ENCODE measurements at regions of chr4 and their contacts with region 1.

Region 1: DNA sequence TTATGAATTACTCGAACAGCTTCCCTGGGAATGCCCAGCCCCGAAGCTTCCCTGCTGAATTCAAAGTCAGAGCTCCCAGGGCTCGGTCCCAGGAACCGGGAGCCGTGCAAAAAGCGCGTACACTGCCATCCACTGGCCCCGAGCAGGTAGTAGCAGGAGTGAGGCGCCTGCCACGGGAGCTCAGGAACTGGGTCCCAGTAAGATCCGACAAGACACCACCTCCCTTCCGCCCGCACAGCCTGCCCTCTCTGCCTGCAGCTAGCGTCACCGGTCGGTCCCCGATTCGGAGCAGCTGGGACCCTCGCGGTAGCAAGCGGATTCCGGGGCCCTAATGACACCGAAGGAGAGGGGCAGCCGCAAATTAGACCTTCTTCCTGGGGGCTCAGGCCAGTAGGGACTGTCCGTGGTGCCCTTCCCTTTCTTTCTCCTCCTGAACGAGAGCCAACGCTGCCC is 1.2 kb downstream of the CORIN start:
- DNase-seq: peak; percentile 74
- H3K4me3 Mint-ChIP-seq: peak overlapping the region; percentile 78
- H3K27ac Mint-ChIP-seq: no peak overlapping the region
- H3K4me1 Mint-ChIP-seq: peaks cover 25% of the 10 kb centered on the region
- H3K27me3 Mint-ChIP-seq: peaks cover 5% of the 10 kb centered on the region

Region 2: DNA sequence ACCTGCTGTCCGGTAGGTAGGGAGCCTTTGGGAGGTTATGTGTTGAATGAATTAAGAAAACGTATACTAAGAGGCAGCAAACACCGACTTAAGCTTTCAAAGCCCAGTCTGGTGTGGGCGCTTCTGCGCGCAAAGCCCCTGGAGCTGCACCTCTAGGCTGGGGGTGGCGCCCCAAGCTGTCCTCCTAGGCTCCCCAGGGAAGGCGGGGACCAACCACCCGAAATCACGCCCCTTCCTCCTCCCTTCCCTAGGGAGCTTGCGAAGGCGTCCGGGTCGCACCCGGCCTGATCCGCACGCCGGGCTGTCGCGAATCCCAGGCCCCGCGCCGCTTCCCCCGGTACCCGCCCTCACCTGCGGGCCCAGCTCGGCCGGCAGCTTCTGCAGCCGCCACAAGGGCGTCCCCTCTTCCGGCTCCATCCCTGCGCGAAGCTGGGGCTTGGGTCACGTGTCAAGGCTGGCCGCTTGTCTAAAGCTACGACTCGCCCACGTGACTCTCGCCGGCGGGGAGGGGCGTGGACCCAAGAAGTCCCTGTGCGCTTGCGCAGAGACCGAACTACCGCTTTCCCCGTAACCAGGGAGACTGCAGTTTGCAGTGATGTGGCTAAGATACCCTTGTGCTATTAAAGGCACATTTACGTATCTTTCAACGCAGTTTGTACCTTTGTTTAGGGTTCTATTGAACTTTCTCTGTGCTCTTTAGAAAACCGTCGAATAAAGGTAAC is 373.3 kb before region 1 on chr4 and contains the start of gene COMMD8:
- CTCF ChIA-PET with region 1: no interaction called
- intact Hi-C with region 1: loop called (anchors 2 kb)
- DNase-seq: peak; percentile 98
- H3K4me3 Mint-ChIP-seq: peak within 1 kb of the TSS; percentile 81
- H3K27ac Mint-ChIP-seq: peak within 1 kb of the TSS; percentile 60
- H3K4me1 Mint-ChIP-seq: peaks cover 27% of the 10 kb centered on the region
- H3K27me3 Mint-ChIP-seq: no peaks in the 10 kb centered on the region
- total RNA-seq, gene COMMD8: 29.0 to 29.6 TPM

Region 3: GRCh38 chr4:47598896-47599295 is 237.8 kb before region 1 on chr4:
- CTCF ChIA-PET with region 1: no interaction called
- intact Hi-C with region 1: no loop called
- DNase-seq: no peak
- H3K4me3 Mint-ChIP-seq: no peak overlapping the region
- H3K27ac Mint-ChIP-seq: no peak overlapping the region
- H3K4me1 Mint-ChIP-seq: no peaks in the 10 kb centered on the region
- H3K27me3 Mint-ChIP-seq: no peaks in the 10 kb centered on the region

Region 4: GRCh38 chr4:47686294-47686872 is 150.3 kb before region 1 on chr4:
- CTCF ChIA-PET with region 1: interaction called, 32 read pairs
- intact Hi-C with region 1: loop called (anchors 1 kb)
- DNase-seq: peak; percentile 85
- H3K4me3 Mint-ChIP-seq: no peak overlapping the region
- H3K27ac Mint-ChIP-seq: no peak overlapping the region
- H3K4me1 Mint-ChIP-seq: no peaks in the 10 kb centered on the region
- H3K27me3 Mint-ChIP-seq: peaks cover 4% of the 10 kb centered on the region

Region 5: GRCh38 chr4:47873877-47874541 is 37.3 kb after region 1 on chr4:
- CTCF ChIA-PET with region 1: interaction called, 4 read pairs
- intact Hi-C with region 1: loop called (anchors 1 kb)
- DNase-seq: no peak
- H3K4me3 Mint-ChIP-seq: no peak overlapping the region
- H3K27ac Mint-ChIP-seq: peak overlapping the region; percentile 16
- H3K4me1 Mint-ChIP-seq: peaks cover 11% of the 10 kb centered on the region
- H3K27me3 Mint-ChIP-seq: no peaks in the 10 kb centered on the region

Region 6: DNA sequence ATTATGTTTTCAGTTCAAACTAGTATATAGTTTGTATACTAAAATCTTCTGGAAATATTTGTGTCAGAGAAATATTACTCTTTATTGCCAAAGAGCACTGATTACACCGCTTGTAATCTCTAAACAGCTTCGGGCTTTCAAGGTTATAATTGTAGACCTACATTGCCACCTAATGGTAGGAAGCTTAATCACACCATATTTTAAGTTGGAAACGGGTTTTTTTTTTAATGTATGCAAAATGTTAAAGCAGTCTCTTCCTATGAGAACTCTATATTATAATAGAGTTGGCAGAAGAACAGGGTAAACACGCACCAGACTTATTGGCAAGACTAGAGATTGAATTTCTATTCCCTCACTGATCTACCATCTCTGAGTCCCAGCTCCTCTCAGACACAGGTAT is 97.2 kb after region 1 on chr4:
- CTCF ChIA-PET with region 1: interaction called, 11 read pairs
- intact Hi-C with region 1: loop called (anchors 1 kb)
- DNase-seq: no peak
- H3K4me3 Mint-ChIP-seq: no peak overlapping the region
- H3K27ac Mint-ChIP-seq: no peak overlapping the region
- H3K4me1 Mint-ChIP-seq: peaks cover 2% of the 10 kb centered on the region
- H3K27me3 Mint-ChIP-seq: no peaks in the 10 kb centered on the region

Region 7: DNA sequence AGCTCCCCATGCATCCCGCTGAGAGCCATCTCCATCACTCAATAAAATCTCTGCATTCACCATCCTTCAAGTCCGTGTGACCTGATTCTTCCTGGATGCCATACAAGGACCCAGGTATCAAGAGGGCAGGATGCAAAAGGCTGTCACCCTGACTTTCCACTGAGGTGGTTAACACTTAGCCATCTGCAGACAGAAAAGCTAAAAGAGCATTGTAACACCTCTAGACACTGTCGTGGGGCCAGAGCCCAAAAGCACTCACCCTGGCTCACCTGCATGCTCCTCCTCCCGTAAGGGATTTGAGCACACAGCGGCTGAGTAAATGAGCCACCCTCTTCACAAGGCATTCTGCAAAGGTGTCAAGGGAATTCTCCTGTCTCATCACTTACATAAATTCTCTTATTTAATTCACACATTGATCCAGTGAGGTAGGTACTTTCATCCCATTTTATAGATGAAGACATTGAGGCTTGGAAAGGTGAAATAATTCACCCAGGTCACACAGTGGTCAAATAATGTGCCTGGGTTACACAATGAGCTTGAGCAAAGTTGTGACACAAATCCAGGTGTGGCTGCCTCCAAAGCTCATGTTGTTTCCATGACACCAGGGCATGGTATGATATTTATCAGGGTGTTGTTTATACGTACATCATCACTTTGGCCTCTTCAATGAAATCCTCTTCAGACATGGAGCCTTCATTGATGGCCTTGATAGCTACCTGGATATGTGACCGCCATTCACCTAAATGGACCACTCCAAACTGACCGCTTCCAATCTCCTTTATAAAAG is 249.3 kb after region 1 on chr4:
- CTCF ChIA-PET with region 1: interaction called, 7 read pairs
- intact Hi-C with region 1: loop called (anchors 5 kb)
- DNase-seq: no peak
- H3K4me3 Mint-ChIP-seq: no peak overlapping the region
- H3K27ac Mint-ChIP-seq: no peak overlapping the region
- H3K4me1 Mint-ChIP-seq: peaks cover 27% of the 10 kb centered on the region
- H3K27me3 Mint-ChIP-seq: no peaks in the 10 kb centered on the region

Region 8: GRCh38 chr4:48588230-48589097 is 751.8 kb after region 1 on chr4:
- CTCF ChIA-PET with region 1: no interaction called
- intact Hi-C with region 1: no loop called
- DNase-seq: no peak
- H3K4me3 Mint-ChIP-seq: no peak overlapping the region
- H3K27ac Mint-ChIP-seq: peak overlapping the region; percentile 42
- H3K4me1 Mint-ChIP-seq: peaks cover 15% of the 10 kb centered on the region
- H3K27me3 Mint-ChIP-seq: no peaks in the 10 kb centered on the region

Measured in activated naive CD4-positive, alpha-beta T cell treated with anti-CD3 and anti-CD28 coated beads for 36 hours (primary cell).